CD8-positive, alpha-beta T cell (primary cell): ENCODE measurements at regions of chr17 and their contacts with region 1.

Region 1: DNA sequence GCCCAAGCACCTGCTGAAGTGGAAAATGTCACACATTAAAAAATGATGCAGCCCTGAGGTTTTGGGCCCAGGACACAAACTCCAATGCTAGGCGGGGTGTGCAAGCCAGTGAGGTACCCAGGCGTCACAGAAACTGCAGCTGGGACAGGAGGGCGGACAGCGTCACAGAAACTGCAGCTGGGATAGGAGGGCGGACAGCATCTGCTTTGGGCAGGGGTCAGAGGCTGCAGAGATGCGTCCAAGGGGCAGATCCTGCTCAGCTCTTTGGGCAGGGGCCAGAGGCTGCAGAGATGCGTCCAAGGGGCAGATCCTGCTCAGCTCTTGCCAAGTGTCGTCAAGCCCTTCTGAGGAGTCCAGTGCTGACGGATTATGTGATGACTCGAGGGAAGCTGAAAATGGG is 43.9 kb upstream of the RCVRN start:
- DNase-seq: no peak
- ATAC-seq: no peak
- H3K4me3 ChIP-seq: no peak overlapping the region
- H3K4me3 Mint-ChIP-seq: no peak overlapping the region
- H3K27ac ChIP-seq: no peak overlapping the region
- H3K27ac Mint-ChIP-seq: no peak overlapping the region
- H3K4me1 ChIP-seq: no peaks in the 10 kb centered on the region
- H3K4me1 Mint-ChIP-seq: no peaks in the 10 kb centered on the region
- H3K27me3 ChIP-seq: no peaks in the 10 kb centered on the region
- H3K27me3 Mint-ChIP-seq: no peaks in the 10 kb centered on the region
- CTCF ChIP-seq: no peak

Region 2: GRCh38 chr17:9976283-9977179 is 27.6 kb after region 1 on chr17:
- CTCF ChIA-PET with region 1: no interaction called
- POLR2A ChIA-PET with region 1: no interaction called
- intact Hi-C with region 1: loop called in 1 of 2 experiments (anchors 1 kb)
- DNase-seq: no peak
- ATAC-seq: no peak
- H3K4me3 ChIP-seq: no peak overlapping the region
- H3K4me3 Mint-ChIP-seq: no peak overlapping the region
- H3K27ac ChIP-seq: no peak overlapping the region
- H3K27ac Mint-ChIP-seq: no peak overlapping the region
- H3K4me1 ChIP-seq: no peaks in the 10 kb centered on the region
- H3K4me1 Mint-ChIP-seq: no peaks in the 10 kb centered on the region
- H3K27me3 ChIP-seq: no peaks in the 10 kb centered on the region
- H3K27me3 Mint-ChIP-seq: no peaks in the 10 kb centered on the region
- CTCF ChIP-seq: no peak